Mammary epithelial cell (primary cell): ENCODE measurements at regions of chr6 and their contacts with region 1.

Region 1: GRCh38 chr6:55445648-55446204 is 118.5 kb downstream of the GFRAL start:
- DNase-seq: peak; percentile 7
- H3K4me3 ChIP-seq: no peak overlapping the region
- H3K27ac ChIP-seq: no peak overlapping the region
- H3K4me1 ChIP-seq: no peaks in the 10 kb centered on the region
- H3K27me3 ChIP-seq: peaks cover 2% of the 10 kb centered on the region
- CTCF ChIP-seq: peak; percentile 41 to 60

Region 2: DNA sequence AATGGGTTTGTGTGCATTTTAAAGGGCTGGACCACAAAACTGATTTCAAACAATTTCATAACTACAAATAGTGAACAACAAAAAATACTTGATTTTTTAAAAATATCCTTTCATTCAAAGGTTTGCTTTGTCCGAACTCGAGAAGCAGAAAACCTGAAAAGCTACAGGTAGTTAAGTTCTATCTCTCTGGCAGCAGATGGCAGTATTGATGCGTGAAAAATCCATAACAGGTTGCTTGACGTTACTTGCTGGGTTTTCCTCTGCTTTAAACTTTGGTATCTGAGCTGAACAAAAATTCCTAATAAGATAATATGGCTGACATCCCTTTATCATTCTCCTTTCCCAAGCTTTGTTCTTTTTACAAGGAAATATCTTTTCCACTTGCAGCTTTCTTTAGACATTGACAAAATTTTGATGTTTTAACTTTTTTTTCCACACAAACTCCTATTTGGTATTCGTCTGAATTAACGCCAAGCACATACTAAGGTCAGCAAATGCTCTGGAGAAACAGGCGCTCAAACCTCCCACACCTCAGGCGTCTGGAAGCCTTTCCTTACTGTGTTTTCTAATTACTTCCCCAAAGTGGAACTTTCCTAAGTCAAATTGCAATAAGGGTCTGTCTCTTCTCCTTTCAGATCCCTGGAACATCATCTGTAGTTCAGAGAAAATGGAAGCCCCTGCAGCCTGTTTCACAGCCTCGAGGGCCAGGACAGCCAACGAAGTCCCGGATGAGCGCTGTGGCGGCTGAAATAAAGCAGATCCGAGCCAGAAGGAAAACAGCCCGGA is 168.8 kb before region 1 on chr6:
- CTCF ChIA-PET with region 1: no interaction called
- dilution Hi-C with region 1: no loop called
- in situ Hi-C with region 1: no loop called
- intact Hi-C with region 1: loop called (anchors 1 kb)
- DNase-seq: peak; percentile 39
- H3K4me3 ChIP-seq: no peak overlapping the region
- H3K27ac ChIP-seq: no peak overlapping the region
- H3K4me1 ChIP-seq: no peaks in the 10 kb centered on the region
- H3K27me3 ChIP-seq: peaks cover 1% of the 10 kb centered on the region
- CTCF ChIP-seq: peak; percentile 56 to 71

Region 3: GRCh38 chr6:55528621-55529020 is 82.9 kb after region 1 on chr6:
- CTCF ChIA-PET with region 1: no interaction called
- dilution Hi-C with region 1: no loop called
- in situ Hi-C with region 1: no loop called
- intact Hi-C with region 1: loop called (anchors 2 kb)
- DNase-seq: peak; percentile 44
- H3K4me3 ChIP-seq: no peak overlapping the region
- H3K27ac ChIP-seq: no peak overlapping the region
- H3K4me1 ChIP-seq: no peaks in the 10 kb centered on the region
- H3K27me3 ChIP-seq: no peaks in the 10 kb centered on the region
- CTCF ChIP-seq: peak; percentile 56 to 67

Region 4: GRCh38 chr6:55617272-55617671 is 171.5 kb after region 1 on chr6:
- CTCF ChIA-PET with region 1: no interaction called
- dilution Hi-C with region 1: no loop called
- in situ Hi-C with region 1: no loop called
- intact Hi-C with region 1: loop called (anchors 2 kb)
- DNase-seq: peak; percentile 44
- H3K4me3 ChIP-seq: no peak overlapping the region
- H3K27ac ChIP-seq: no peak overlapping the region
- H3K4me1 ChIP-seq: no peaks in the 10 kb centered on the region
- H3K27me3 ChIP-seq: no peaks in the 10 kb centered on the region
- CTCF ChIP-seq: peak; percentile 67 to 69

Region 5: GRCh38 chr6:55729665-55730064 is 283.9 kb after region 1 on chr6:
- CTCF ChIA-PET with region 1: no interaction called
- dilution Hi-C with region 1: no loop called
- in situ Hi-C with region 1: no loop called
- intact Hi-C with region 1: no loop called
- DNase-seq: peak; percentile 5
- H3K4me3 ChIP-seq: no peak overlapping the region
- H3K27ac ChIP-seq: no peak overlapping the region
- H3K4me1 ChIP-seq: no peaks in the 10 kb centered on the region
- H3K27me3 ChIP-seq: no peaks in the 10 kb centered on the region
- CTCF ChIP-seq: no peak

Region 6: GRCh38 chr6:55886185-55886836 is 440.6 kb after region 1 on chr6:
- CTCF ChIA-PET with region 1: no interaction called
- dilution Hi-C with region 1: no loop called
- in situ Hi-C with region 1: loop called (anchors 25 kb)
- intact Hi-C with region 1: loop called (anchors 1 kb)
- DNase-seq: no peak
- H3K4me3 ChIP-seq: no peak overlapping the region
- H3K27ac ChIP-seq: no peak overlapping the region
- H3K4me1 ChIP-seq: peaks cover 8% of the 10 kb centered on the region
- H3K27me3 ChIP-seq: no peaks in the 10 kb centered on the region
- CTCF ChIP-seq: peak; percentile 27 to 42

Region 7: GRCh38 chr6:55953335-55953734 is 507.6 kb after region 1 on chr6:
- CTCF ChIA-PET with region 1: no interaction called
- dilution Hi-C with region 1: no loop called
- in situ Hi-C with region 1: loop called in 1 of 2 experiments (anchors 25 kb)
- intact Hi-C with region 1: loop called (anchors 2 kb)
- DNase-seq: peak; percentile 36
- H3K4me3 ChIP-seq: peak overlapping the region in 2 of 3 experiments; percentile 1 to 2
- H3K27ac ChIP-seq: no peak overlapping the region
- H3K4me1 ChIP-seq: no peaks in the 10 kb centered on the region
- H3K27me3 ChIP-seq: no peaks in the 10 kb centered on the region
- CTCF ChIP-seq: peak; percentile 43 to 56

Region 8: DNA sequence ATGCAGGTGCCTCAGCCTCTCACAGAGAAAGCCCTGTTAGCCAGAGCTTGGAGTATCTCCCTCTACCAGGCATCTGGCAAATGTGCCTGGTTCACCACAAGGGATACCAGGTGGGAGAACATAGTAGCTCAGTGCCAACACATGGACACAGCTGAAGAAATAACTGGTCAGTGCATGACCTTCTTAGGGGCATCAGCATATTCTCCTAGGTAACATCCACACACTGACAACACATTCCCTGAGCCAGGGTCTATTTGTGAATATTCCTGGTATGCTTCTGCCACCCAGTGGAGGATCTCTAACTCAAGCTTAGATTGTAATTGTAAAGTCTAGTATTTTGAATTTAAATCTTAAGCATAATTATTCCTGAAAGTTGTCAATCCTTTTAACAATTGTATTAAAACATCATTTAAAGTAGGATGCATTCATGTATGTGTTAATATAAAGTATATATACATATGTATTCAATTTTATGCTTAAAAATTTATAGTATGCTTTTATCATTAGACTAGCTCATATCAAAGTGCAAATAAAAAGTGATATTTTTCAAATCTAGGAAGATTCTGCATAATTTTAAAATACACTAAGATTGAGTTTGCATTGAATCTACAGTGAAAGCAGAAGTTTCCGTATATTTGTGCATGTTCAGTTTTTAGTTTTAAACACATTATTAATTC is 846.9 kb after region 1 on chr6:
- CTCF ChIA-PET with region 1: no interaction called
- dilution Hi-C with region 1: no loop called
- in situ Hi-C with region 1: loop called in 1 of 2 experiments (anchors 25 kb)
- intact Hi-C with region 1: loop called (anchors 5 kb)
- DNase-seq: peak; percentile 41
- H3K4me3 ChIP-seq: no peak overlapping the region
- H3K27ac ChIP-seq: no peak overlapping the region
- H3K4me1 ChIP-seq: peaks cover 5% of the 10 kb centered on the region
- H3K27me3 ChIP-seq: no peaks in the 10 kb centered on the region
- CTCF ChIP-seq: peak; percentile 51 to 69